ENCODE measurements at regions of chr5 and their contacts with region 1.

Region 1: DNA sequence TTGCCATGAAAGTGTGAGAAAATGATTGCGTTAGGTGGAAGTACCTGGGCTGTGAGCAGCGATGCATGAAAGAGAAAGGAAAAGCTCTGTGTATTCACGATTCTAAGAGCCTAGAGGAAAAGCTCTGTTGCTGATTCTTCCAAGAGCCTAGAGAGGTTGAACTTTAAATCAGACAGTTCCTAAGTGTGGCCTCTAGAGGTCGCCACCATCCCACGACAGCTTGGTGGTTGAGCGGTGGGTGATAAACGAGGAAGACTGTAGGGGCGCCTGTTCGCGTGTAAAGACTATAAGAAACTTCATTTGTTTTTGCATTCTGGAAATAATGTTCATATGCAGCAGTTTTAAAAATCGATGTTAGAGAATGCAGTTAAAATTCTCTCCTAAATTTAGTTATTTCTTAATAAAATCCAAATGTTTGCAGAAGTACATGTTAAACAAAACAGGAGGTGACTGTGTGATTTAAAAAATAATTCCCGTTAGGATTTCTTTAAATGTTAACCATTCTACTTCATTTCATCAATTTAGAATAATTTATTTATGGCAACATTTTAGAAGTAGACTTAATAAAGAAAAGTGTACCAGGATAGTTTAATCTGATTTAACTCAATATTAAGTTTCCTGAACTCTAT is 107.7 kb downstream of the TENT4A start:
- DNase-seq: peak; percentile 59 to 86
- H3K4me3 ChIP-seq: no peak overlapping the region
- H3K27ac ChIP-seq: no peak overlapping the region
- H3K4me1 ChIP-seq: no peaks in the 10 kb centered on the region; a peak in 1 of 7 replicates
- H3K27me3 ChIP-seq: no peaks in the 10 kb centered on the region
- CTCF ChIP-seq: peak; percentile 74 to 99 (median 93)
- EP300 ChIP-seq: no peak
- POLR2A ChIP-seq: no peak
- RAD21 ChIP-seq: peak; percentile 97 to 99

Region 2: GRCh38 chr5:6765612-6766525 is 55.1 kb before region 1 on chr5:
- CTCF ChIA-PET with region 1: interaction called, 97 read pairs
- POLR2A ChIA-PET with region 1: interaction called, 3 read pairs
- DNase-seq: peak; percentile 77 to 94
- H3K4me3 ChIP-seq: no peak overlapping the region; a peak in 1 of 8 replicates
- H3K27ac ChIP-seq: no peak overlapping the region
- H3K4me1 ChIP-seq: peaks cover 0 to 2% (median 1%) of the 10 kb centered on the region in 4 experiments; a peak in 2 of 7 replicates
- H3K27me3 ChIP-seq: no peaks in the 10 kb centered on the region
- CTCF ChIP-seq: peak in 2 of 3 experiments; percentile 90 to 95; a peak in 3 of 4 replicates
- EP300 ChIP-seq: no peak
- POLR2A ChIP-seq: peak in 1 of 2 experiments; percentile 29; a peak in 1 of 3 replicates
- RAD21 ChIP-seq: peak; percentile 90

Region 3: DNA sequence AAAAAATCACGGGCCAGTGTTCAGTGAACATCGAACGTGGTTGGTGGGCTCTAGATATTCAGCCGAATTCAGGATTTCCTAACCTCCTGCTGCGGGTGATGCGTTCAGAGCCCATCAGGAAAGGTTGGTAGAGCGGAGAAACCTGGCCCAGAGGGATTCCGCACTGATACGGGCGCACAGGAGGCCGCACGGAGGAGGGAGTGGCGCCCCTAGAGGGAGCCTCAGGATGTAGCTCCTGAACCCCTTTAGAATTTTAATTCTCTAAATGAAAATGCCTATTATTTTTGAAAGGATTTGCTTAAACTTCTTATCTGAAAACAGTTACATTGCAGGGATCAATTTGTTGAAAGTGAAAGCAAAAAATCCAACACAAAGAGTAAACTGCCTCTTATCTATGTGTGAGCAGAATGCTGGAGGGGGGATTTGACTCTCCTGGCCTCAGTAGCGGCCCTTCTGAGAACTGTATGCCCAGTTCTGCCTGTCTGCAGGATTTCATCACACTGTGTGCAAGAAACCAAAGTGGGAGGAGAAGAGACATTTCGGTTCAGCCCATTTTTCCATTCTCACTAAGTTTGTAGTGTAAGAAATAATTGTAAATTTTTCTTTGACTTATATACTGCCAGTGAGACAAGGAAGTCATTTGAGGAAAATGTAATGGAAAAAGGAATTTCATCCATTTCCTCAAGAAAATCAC is 31.9 kb before region 1 on chr5:
- CTCF ChIA-PET with region 1: interaction called, 37 read pairs
- POLR2A ChIA-PET with region 1: interaction called, 3 read pairs
- DNase-seq: peak in 1 of 2 experiments; percentile 68
- H3K4me3 ChIP-seq: no peak overlapping the region
- H3K27ac ChIP-seq: no peak overlapping the region
- H3K4me1 ChIP-seq: no peaks in the 10 kb centered on the region
- H3K27me3 ChIP-seq: no peaks in the 10 kb centered on the region
- CTCF ChIP-seq: peak; percentile 55 to 71 (median 69)
- EP300 ChIP-seq: no peak
- POLR2A ChIP-seq: no peak
- RAD21 ChIP-seq: peak; percentile 30 to 51; a peak in 3 of 4 replicates

Region 4: GRCh38 chr5:6837519-6838110 is 16.6 kb after region 1 on chr5:
- CTCF ChIA-PET with region 1: interaction called, 45 read pairs
- POLR2A ChIA-PET with region 1: no interaction called
- DNase-seq: peak; percentile 27 to 96
- H3K4me3 ChIP-seq: no peak overlapping the region
- H3K27ac ChIP-seq: no peak overlapping the region
- H3K4me1 ChIP-seq: no peaks in the 10 kb centered on the region
- H3K27me3 ChIP-seq: no peaks in the 10 kb centered on the region; a peak in 2 of 7 replicates
- CTCF ChIP-seq: peak; percentile 80 to 96 (median 84)
- EP300 ChIP-seq: no peak
- POLR2A ChIP-seq: no peak
- RAD21 ChIP-seq: peak; percentile 68 to 78

Region 5: DNA sequence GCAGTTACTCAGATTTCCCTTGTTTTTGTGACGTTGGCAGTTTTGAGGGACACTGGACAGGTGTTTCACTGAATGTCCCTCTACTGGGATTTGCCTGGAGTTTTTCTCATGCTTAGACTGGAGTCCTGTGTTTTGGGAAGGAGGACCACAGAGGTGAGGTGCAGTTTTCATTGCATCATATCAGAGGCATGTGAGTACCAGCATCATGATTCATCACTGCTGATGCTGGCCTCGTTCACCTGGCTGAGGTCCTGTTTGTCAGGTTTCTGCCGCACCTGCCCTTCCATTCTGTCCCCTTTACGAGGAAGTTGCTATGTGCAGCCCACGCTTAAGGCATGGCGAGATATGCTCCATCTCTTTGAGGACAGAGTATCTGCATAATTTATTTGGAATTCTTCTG is 54.4 kb after region 1 on chr5:
- CTCF ChIA-PET with region 1: interaction called, 11 read pairs
- POLR2A ChIA-PET with region 1: no interaction called
- DNase-seq: no peak
- H3K4me3 ChIP-seq: no peak overlapping the region
- H3K27ac ChIP-seq: no peak overlapping the region
- H3K4me1 ChIP-seq: no peaks in the 10 kb centered on the region
- H3K27me3 ChIP-seq: no peaks in the 10 kb centered on the region
- CTCF ChIP-seq: no peak
- EP300 ChIP-seq: no peak
- POLR2A ChIP-seq: no peak
- RAD21 ChIP-seq: no peak

Region 6: DNA sequence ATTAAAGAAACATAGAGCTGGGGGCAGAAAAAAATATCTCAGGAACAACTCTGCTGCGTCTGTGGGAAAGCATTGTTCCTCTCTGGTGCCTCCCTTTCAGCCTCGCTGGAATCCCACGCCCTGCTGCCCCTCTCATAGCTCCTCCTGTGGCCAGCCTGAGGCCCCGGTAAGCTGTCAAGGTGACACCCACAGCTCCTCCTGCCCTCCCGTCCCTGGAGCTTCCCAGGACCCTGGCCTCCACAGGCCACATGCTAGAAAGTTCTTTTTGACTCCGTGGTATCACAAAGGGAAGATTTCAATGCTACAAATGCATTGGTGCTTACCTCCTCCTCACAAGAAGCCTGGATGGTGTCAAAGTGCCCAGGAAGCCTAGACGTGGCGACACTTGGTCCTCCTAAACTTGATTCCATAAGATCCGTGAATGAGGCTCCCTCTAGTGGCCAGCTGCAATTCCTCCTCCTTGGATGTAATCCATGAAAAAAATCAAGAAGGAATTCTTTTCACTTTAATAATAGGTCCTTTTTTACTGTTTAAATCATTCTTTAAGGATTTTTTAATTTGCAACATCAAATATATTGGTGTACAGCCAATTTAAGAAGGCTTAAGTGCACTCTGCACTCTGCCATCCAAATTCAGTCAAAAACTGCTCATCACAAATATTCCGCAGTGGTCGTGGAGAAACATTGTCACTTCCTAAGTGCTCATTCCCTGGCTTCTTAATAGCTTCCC is 925.1 kb after region 1 on chr5:
- CTCF ChIA-PET with region 1: interaction called, 10 read pairs
- POLR2A ChIA-PET with region 1: no interaction called
- DNase-seq: peak; percentile 58 to 91
- H3K4me3 ChIP-seq: no peak overlapping the region
- H3K27ac ChIP-seq: no peak overlapping the region
- H3K4me1 ChIP-seq: peaks cover 0 to 2% (median under 1%) of the 10 kb centered on the region in 4 experiments; a peak in 1 of 7 replicates
- H3K27me3 ChIP-seq: no peaks in the 10 kb centered on the region
- CTCF ChIP-seq: peak; percentile 49 to 81 (median 66)
- EP300 ChIP-seq: no peak
- POLR2A ChIP-seq: no peak
- RAD21 ChIP-seq: peak; percentile 79

Measured in H1 (cell line).